ENCODE measurements at regions of chr9 and their contacts with region 1.

Region 1: GRCh38 chr9:4489919-4490704 is at the start of gene SLC1A1:
- DNase-seq: peak in 4 of 5 donors; percentile 10 to 28 (median 24)
- H3K4me3 ChIP-seq: peak within 1 kb of the TSS in 1 of 2 donors; percentile 38
- H3K4me3 Mint-ChIP-seq: peak within 1 kb of the TSS; percentile 73 to 93 (median 86)
- H3K27ac ChIP-seq: no peak within 1 kb of the TSS
- H3K27ac Mint-ChIP-seq: peak within 1 kb of the TSS in 2 of 7 donors; percentile 66 to 68
- H3K4me1 ChIP-seq: peaks cover 19% of the 10 kb centered on the region
- H3K4me1 Mint-ChIP-seq: peaks cover 12 to 31% (median 22%) of the 10 kb centered on the region in 4 donors
- H3K27me3 ChIP-seq: peaks cover 20% of the 10 kb centered on the region
- H3K27me3 Mint-ChIP-seq: peaks cover 13 to 20% of the 10 kb centered on the region in 2 donors
- total RNA-seq, gene SLC1A1: 0.52 to 1.00 TPM

Region 2: DNA sequence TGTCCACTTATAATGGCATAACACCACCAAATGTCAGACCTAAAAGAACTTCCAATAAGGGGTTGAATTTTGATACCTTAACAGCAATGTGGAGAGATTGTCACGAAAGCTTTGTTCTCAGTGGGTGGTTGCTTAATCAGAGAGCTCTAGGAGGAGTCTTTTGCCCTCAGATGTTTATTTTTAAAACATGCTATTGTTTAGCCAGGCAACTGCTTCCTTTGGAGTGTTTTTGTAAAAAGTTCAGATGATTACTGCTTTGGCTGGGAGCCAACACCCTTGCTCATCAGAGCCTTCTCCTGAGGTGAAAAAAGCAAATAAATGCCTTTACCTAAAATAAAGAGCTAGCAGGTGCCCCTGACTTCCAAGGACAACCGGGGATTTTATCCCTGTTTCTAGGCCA is 65.1 kb after region 1 on chr9:
- CTCF ChIA-PET with region 1: no interaction called
- POLR2A ChIA-PET with region 1: no interaction called
- intact Hi-C with region 1: no loop called
- DNase-seq: peak; percentile 26 to 61 (median 57)
- H3K4me3 ChIP-seq: no peak overlapping the region
- H3K4me3 Mint-ChIP-seq: peak overlapping the region in 2 of 8 donors; percentile 23 to 36
- H3K27ac ChIP-seq: no peak overlapping the region
- H3K27ac Mint-ChIP-seq: peak overlapping the region; percentile 5 to 86 (median 25)
- H3K4me1 ChIP-seq: peaks cover 32% of the 10 kb centered on the region
- H3K4me1 Mint-ChIP-seq: peaks cover 23 to 39% (median 34%) of the 10 kb centered on the region in 4 donors
- H3K27me3 ChIP-seq: no peaks in the 10 kb centered on the region
- H3K27me3 Mint-ChIP-seq: no peaks in the 10 kb centered on the region

Region 3: DNA sequence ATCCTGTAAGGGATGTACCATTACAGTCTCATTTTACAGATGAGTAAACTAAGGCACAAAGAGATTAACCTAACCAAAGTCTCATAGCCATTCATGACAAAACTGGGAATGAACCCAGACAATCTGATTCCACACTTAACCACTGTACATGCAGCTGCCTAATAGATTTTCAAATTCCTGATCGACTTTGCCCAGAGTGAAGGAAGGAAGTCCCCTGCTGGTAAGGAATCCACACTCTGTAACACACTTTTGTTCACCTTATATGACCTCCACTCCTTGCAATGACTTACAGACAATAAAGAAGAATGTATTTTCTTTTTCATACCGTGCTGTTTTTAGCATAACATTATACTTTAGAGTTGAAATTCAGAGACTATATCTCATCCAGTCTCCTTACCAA is 140.7 kb after region 1 on chr9:
- CTCF ChIA-PET with region 1: no interaction called
- POLR2A ChIA-PET with region 1: no interaction called
- intact Hi-C with region 1: loop called (anchors 10 kb)
- DNase-seq: no peak
- H3K4me3 ChIP-seq: no peak overlapping the region
- H3K4me3 Mint-ChIP-seq: no peak overlapping the region
- H3K27ac ChIP-seq: no peak overlapping the region
- H3K27ac Mint-ChIP-seq: no peak overlapping the region
- H3K4me1 ChIP-seq: no peaks in the 10 kb centered on the region
- H3K4me1 Mint-ChIP-seq: peaks cover 0 to 6% (median 3%) of the 10 kb centered on the region in 4 donors
- H3K27me3 ChIP-seq: no peaks in the 10 kb centered on the region
- H3K27me3 Mint-ChIP-seq: no peaks in the 10 kb centered on the region

Region 4: DNA sequence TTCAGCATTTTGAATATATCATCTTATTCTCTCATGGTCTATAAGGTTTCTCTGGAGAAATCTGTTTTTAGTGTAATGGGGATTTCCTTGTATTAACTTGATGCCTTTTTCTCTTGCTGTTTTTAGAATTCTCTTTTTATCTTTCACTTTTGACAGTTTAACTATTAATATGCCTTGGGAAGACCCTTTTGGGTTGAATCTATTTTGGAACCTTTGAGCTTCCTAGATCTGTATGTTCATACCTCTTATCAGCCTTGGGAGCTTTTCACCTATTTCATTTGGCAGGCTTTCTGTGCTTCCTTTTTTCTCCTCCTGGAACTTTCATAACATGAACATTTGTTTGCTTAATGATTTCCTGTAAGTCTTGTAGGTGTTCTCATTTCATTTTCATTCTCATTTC is 324.8 kb after region 1 on chr9:
- CTCF ChIA-PET with region 1: no interaction called
- POLR2A ChIA-PET with region 1: no interaction called
- intact Hi-C with region 1: no loop called
- DNase-seq: no peak
- H3K4me3 ChIP-seq: no peak overlapping the region
- H3K4me3 Mint-ChIP-seq: no peak overlapping the region
- H3K27ac ChIP-seq: no peak overlapping the region
- H3K27ac Mint-ChIP-seq: no peak overlapping the region
- H3K4me1 ChIP-seq: peaks cover 3% of the 10 kb centered on the region
- H3K4me1 Mint-ChIP-seq: peaks cover 14 to 52% (median 23%) of the 10 kb centered on the region in 4 donors
- H3K27me3 ChIP-seq: no peaks in the 10 kb centered on the region
- H3K27me3 Mint-ChIP-seq: no peaks in the 10 kb centered on the region